ENCODE measurements at regions of chr5 and their contacts with region 1.

Region 1: DNA sequence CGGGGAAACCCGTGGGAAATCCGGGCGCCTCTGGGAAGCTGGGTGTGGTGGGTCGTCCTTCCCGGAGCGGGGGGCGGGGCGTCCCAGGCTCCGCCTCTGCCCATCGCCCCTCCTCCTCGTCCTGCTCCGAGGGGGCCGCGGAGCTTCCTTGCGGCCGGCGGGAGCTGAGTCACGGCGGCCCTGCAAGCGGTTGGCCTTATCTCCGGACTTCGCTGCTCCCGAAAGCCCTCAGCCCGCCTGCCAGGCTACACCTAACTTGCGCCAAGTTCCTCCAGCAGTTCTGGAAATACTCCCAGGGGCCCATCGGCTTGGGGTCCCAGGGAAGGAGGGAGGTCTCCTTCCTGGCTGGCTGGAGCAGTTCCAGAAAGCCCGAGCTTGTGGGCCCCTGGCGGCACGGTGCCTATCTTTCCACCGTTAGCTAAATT is 54.1 kb upstream of the CDKN2AIPNL start:
- DNase-seq: peak; percentile 43
- ATAC-seq: peak; percentile 93
- H3K4me3 ChIP-seq: peak overlapping the region; percentile 99
- H3K27ac ChIP-seq: peak overlapping the region; percentile 82
- H3K4me1 ChIP-seq: peaks cover 11% of the 10 kb centered on the region
- H3K27me3 ChIP-seq: no peaks in the 10 kb centered on the region
- CTCF ChIP-seq: no peak
- EP300 ChIP-seq: no peak
- POLR2A ChIP-seq: peak; percentile 85
- RAD21 ChIP-seq: no peak

Region 2: DNA sequence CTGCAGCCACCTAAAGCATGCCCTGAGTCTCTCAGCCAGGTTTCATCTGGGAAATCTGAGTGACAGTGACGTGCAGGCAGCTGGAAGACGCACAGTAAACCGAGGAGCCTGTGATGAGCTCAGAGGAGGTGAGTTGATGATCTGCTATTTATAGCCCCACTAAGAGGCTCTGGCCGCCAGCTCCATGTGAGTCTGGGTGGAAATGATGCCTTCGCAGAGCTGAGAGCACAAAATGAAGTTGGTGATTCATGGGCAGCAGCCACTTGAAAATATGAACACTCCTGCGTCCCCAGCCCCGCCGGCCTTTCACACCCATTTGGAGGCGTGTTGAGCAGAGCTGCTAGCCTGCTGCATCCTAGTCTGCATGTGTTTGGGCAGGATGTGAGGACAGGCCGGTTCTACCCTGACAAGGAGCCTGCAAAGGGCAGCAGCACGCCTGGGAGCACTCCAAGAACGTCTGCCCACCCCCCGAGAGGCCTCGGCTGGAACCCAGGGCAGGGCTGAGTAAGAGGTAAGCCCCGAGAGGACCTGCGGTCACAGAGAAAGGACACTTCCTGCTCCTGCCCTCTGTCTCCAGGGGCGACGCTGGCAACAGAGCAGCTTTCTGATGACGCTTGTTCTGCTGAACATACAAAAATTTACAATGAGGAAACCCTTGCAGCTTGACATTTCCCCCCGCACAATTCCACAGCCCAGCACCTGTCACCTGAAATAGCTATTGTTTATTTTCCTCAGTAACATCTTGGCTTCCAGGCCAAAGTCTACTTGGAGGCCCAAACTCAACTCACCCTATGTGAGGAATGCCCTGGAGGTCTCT is 29.1 kb before region 1 on chr5:
- CTCF ChIA-PET with region 1: interaction called, 3 read pairs
- POLR2A ChIA-PET with region 1: interaction called, 7 read pairs
- RAD21 ChIA-PET with region 1: interaction called, 18 read pairs
- SMC1A ChIA-PET with region 1: interaction called, 3 read pairs
- in situ Hi-C with region 1: no loop called
- intact Hi-C with region 1: no loop called
- DNase-seq: peak; percentile 46
- ATAC-seq: peak; percentile 96
- H3K4me3 ChIP-seq: no peak overlapping the region
- H3K27ac ChIP-seq: peak overlapping the region; percentile 24; the same call in 1 of the 2 replicates
- H3K4me1 ChIP-seq: peaks cover 18% of the 10 kb centered on the region
- H3K27me3 ChIP-seq: no peaks in the 10 kb centered on the region
- CTCF ChIP-seq: no peak
- EP300 ChIP-seq: peak in 1 of 2 experiments; percentile 48; a peak in 1 of 4 replicates
- POLR2A ChIP-seq: no peak
- RAD21 ChIP-seq: no peak

Region 3: DNA sequence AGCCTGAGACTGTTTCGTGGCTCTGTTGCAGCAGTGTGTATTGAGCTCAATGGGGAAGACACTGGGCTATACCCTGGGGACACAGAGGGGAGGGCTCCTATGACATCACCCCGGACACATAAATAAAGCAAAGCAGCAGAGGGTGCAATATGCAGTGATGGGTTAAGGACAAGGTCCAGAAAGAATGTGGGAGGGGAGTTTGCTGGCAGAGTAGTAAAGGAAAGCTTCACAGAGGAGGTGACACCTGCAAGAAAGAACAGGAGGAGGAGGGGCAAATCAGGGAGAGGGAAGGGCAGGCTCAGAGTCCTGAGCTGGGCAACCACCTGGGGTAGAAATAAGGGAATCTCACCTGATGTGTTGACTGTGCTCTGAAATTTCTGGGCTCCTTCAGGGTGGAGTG is 18.9 kb before region 1 on chr5:
- CTCF ChIA-PET with region 1: interaction called, 9 read pairs
- POLR2A ChIA-PET with region 1: interaction called, 7 read pairs
- RAD21 ChIA-PET with region 1: interaction called, 16 read pairs
- SMC1A ChIA-PET with region 1: interaction called, 20 read pairs
- in situ Hi-C with region 1: no loop called
- intact Hi-C with region 1: no loop called
- DNase-seq: no peak
- ATAC-seq: peak; percentile 95
- H3K4me3 ChIP-seq: no peak overlapping the region
- H3K27ac ChIP-seq: no peak overlapping the region
- H3K4me1 ChIP-seq: peaks cover 4% of the 10 kb centered on the region; the same call in 1 of the 2 replicates
- H3K27me3 ChIP-seq: no peaks in the 10 kb centered on the region
- CTCF ChIP-seq: no peak; a peak in 1 of 6 replicates
- EP300 ChIP-seq: no peak
- POLR2A ChIP-seq: no peak
- RAD21 ChIP-seq: no peak

Region 4: DNA sequence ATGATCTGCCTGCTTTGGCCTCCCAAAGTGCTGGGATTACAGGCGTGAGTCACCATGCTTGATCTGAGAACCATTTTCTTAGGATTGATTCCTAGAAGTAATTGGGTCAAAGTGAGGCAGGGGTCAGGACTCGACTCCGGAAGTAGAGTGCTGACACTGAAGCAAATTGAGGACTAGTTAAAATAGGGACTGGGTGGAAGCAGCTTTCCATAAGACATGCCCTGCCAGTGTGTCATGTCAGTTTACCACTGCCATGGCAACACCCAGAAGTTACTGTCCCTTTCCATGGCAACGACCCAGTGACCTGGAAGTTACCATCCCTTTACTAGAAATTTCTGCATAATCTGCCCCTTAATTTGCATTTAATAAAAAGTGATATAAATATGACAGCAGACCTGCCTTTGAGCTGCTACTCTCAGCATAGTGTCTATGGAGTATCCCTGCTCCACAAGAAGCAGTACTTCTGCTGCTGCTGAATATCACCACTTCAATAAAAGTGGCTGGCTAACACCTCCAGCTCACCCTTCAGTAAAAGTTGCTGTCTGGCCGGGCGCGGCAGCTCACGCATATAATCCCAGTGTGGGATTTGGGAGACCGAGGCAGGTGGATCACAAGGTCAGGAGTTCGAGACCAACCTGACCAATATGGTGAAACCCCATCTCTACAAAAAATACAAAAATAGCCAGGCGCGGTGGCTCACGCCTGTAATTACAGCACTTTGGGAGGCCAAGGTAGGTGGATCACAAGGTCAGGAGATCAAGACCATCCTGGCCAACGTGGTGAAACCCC is 11.8 kb after region 1 on chr5:
- CTCF ChIA-PET with region 1: interaction called, 13 read pairs
- POLR2A ChIA-PET with region 1: interaction called, 4 read pairs
- RAD21 ChIA-PET with region 1: no interaction called
- SMC1A ChIA-PET with region 1: interaction called, 11 read pairs
- in situ Hi-C with region 1: no loop called
- intact Hi-C with region 1: no loop called
- DNase-seq: no peak
- ATAC-seq: 0 out of 3 replicates have a peak, but pooled peaks have one; percentile 16
- H3K4me3 ChIP-seq: no peak overlapping the region
- H3K27ac ChIP-seq: no peak overlapping the region
- H3K4me1 ChIP-seq: no peaks in the 10 kb centered on the region
- H3K27me3 ChIP-seq: no peaks in the 10 kb centered on the region
- CTCF ChIP-seq: no peak
- EP300 ChIP-seq: no peak
- POLR2A ChIP-seq: no peak
- RAD21 ChIP-seq: no peak

Region 5: GRCh38 chr5:134503088-134503946 is 37.5 kb after region 1 on chr5:
- CTCF ChIA-PET with region 1: no interaction called
- POLR2A ChIA-PET with region 1: interaction called, 7 read pairs
- RAD21 ChIA-PET with region 1: interaction called, 11 read pairs
- SMC1A ChIA-PET with region 1: interaction called, 5 read pairs
- in situ Hi-C with region 1: no loop called
- intact Hi-C with region 1: no loop called
- DNase-seq: peak; percentile 53
- ATAC-seq: peak; percentile 93
- H3K4me3 ChIP-seq: no peak overlapping the region
- H3K27ac ChIP-seq: peak overlapping the region; percentile 67
- H3K4me1 ChIP-seq: peaks cover 15% of the 10 kb centered on the region
- H3K27me3 ChIP-seq: no peaks in the 10 kb centered on the region
- CTCF ChIP-seq: no peak
- EP300 ChIP-seq: no peak
- POLR2A ChIP-seq: peak; percentile 59
- RAD21 ChIP-seq: 0 out of 2 replicates have a peak, but pooled peaks have one; percentile 11

Region 6: GRCh38 chr5:134634227-134634626 is 168.4 kb after region 1 on chr5:
- CTCF ChIA-PET with region 1: no interaction called
- POLR2A ChIA-PET with region 1: no interaction called
- RAD21 ChIA-PET with region 1: no interaction called
- SMC1A ChIA-PET with region 1: no interaction called
- in situ Hi-C with region 1: no loop called
- intact Hi-C with region 1: no loop called
- DNase-seq: no peak
- ATAC-seq: no peak
- H3K4me3 ChIP-seq: no peak overlapping the region
- H3K27ac ChIP-seq: no peak overlapping the region
- H3K4me1 ChIP-seq: peaks cover 13% of the 10 kb centered on the region
- H3K27me3 ChIP-seq: no peaks in the 10 kb centered on the region
- CTCF ChIP-seq: no peak
- EP300 ChIP-seq: no peak
- POLR2A ChIP-seq: no peak
- RAD21 ChIP-seq: no peak

Measured in GM12878 (cell line).